Calu3 (cell line): ENCODE measurements at regions of chr7 and their contacts with region 1.

Region 1: DNA sequence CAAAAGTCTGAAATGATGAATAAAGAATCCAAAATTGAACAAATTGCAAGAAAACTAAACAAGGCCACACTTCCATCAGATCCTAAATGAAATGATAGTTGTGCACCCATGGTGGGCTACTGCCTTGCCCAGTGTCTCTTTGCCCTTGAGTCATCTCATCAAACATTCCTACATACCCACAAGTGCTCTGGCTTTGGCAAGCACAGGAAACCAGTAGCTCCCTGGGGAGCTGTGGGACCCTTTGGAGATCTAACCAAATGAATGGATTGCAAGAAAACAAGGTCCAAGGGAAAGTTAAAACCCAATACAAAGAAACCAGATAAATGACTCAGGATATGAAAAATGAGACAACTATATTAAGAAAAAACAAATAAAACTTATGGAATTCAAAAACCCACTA is 129.8 kb upstream of the TMEM229A start:
- DNase-seq: no peak
- H3K4me3 Mint-ChIP-seq: no peak overlapping the region
- H3K27ac Mint-ChIP-seq: no peak overlapping the region
- H3K4me1 Mint-ChIP-seq: no peaks in the 10 kb centered on the region
- H3K27me3 Mint-ChIP-seq: peaks cover 12% of the 10 kb centered on the region
- CTCF ChIP-seq: no peak

Region 2: GRCh38 chr7:124051681-124052377 is 110.8 kb before region 1 on chr7:
- CTCF ChIA-PET with region 1: no interaction called
- intact Hi-C with region 1: no loop called
- DNase-seq: no peak
- H3K4me3 Mint-ChIP-seq: no peak overlapping the region
- H3K27ac Mint-ChIP-seq: no peak overlapping the region
- H3K4me1 Mint-ChIP-seq: no peaks in the 10 kb centered on the region
- H3K27me3 Mint-ChIP-seq: peaks cover 29% of the 10 kb centered on the region
- CTCF ChIP-seq: no peak

Region 3: GRCh38 chr7:124124201-124124600 is 38.5 kb before region 1 on chr7:
- CTCF ChIA-PET with region 1: no interaction called
- intact Hi-C with region 1: no loop called
- DNase-seq: no peak
- H3K4me3 Mint-ChIP-seq: no peak overlapping the region
- H3K27ac Mint-ChIP-seq: no peak overlapping the region
- H3K4me1 Mint-ChIP-seq: no peaks in the 10 kb centered on the region
- H3K27me3 Mint-ChIP-seq: no peaks in the 10 kb centered on the region
- CTCF ChIP-seq: no peak

Region 4: DNA sequence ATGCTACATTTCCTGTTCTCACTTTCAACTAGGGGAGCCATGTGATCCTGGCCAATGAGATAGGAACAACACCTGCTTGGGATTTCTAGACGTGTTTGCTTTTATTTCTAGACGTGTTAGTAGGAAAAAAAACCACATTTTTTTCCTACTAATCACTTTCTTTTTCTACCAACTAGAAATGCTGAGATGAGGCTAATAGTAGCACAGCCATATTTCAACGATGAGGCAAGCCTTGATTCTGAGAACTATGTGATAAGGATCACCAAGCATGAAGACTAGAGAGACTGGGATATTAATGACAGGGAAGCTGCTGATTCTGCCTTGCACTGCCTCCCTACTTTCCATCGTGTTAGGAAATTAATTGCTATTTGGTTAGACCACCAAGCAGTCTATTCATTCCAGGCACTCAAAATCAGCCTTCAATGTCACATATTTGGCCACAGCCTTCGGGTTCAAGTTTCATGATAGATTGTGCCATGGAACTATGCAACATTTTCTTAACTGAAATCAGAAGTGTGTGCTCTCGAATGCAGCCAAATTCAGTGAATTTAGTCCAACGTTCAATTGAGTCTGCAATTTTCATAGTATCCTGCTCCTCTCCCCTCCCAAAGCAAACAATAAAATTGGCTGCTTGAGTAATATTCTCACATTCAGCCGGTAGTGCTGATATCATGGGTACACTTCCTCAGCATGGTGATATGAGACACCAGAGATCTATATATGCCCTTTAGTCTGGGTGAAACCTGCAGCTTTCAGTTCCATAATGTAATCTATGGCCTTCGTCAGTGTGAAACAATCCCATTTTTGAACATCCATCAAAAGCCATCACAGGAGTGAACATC is 504.9 kb after region 1 on chr7:
- CTCF ChIA-PET with region 1: no interaction called
- intact Hi-C with region 1: loop called (anchors 10 kb)
- DNase-seq: no peak
- H3K4me3 Mint-ChIP-seq: no peak overlapping the region
- H3K27ac Mint-ChIP-seq: no peak overlapping the region
- H3K4me1 Mint-ChIP-seq: no peaks in the 10 kb centered on the region
- H3K27me3 Mint-ChIP-seq: no peaks in the 10 kb centered on the region
- CTCF ChIP-seq: no peak